ENCODE measurements at regions of chr12 and their contacts with region 1.

Region 1: DNA sequence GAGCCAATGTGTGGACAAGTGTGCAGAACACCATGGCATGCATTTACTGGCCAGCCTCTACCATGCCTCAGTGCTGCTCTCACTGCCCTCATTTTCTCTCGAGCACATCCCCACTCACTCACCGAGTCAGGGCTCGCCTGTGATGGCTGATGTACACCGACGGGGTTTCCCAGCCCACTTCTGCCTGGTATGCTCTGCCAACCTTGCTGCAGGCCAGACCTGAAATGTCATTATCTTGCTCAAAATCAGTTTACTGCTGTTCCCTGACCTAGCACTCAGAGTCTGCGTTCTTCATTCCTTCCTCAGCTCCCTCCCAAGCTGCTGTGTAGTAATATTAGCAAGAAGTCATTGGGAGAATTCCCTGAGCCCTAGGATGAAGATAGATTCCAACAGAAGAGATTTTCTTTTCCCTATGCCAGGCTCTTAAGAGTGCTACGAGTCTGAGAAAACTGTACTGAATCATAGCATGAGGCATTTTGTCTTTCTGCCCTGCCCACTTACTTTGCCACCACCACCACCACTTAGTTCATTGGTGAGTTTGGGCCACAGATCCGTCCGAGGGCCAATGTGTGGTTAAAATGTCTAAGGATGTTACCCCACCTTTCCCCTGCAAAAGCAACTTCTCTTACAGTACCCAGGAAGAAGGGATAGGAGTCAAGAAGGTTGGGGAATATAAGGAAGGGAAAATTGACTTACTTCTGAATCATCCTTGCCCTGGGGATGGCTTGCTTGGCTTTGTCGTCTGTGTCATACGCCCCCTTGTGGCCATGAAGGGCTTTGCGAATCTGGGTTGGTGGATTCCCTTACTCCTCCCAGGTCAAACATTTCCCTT is 51.0 kb downstream of the BMAL2 start:
- DNase-seq: peak; percentile 88
- H3K4me3 Mint-ChIP-seq: no peak overlapping the region
- H3K27ac Mint-ChIP-seq: peak overlapping the region; percentile 68
- H3K4me1 Mint-ChIP-seq: no peaks in the 10 kb centered on the region
- H3K27me3 Mint-ChIP-seq: no peaks in the 10 kb centered on the region
- CTCF ChIP-seq: peak; percentile 76

Region 2: GRCh38 chr12:27142101-27142721 is 241.4 kb before region 1 on chr12:
- CTCF ChIA-PET with region 1: no interaction called
- POLR2A ChIA-PET with region 1: no interaction called
- intact Hi-C with region 1: loop called (anchors 5 kb)
- DNase-seq: peak; percentile 84
- H3K4me3 Mint-ChIP-seq: no peak overlapping the region
- H3K27ac Mint-ChIP-seq: peak overlapping the region; percentile 41
- H3K4me1 Mint-ChIP-seq: no peaks in the 10 kb centered on the region
- H3K27me3 Mint-ChIP-seq: no peaks in the 10 kb centered on the region
- CTCF ChIP-seq: peak; percentile 73

Region 3: GRCh38 chr12:27319409-27319808 is 64.2 kb before region 1 on chr12:
- CTCF ChIA-PET with region 1: interaction called, 11 read pairs
- POLR2A ChIA-PET with region 1: interaction called, 3 read pairs
- intact Hi-C with region 1: no loop called
- DNase-seq: peak; percentile 52
- H3K4me3 Mint-ChIP-seq: no peak overlapping the region
- H3K27ac Mint-ChIP-seq: no peak overlapping the region
- H3K4me1 Mint-ChIP-seq: no peaks in the 10 kb centered on the region
- H3K27me3 Mint-ChIP-seq: no peaks in the 10 kb centered on the region
- CTCF ChIP-seq: no peak

Region 4: GRCh38 chr12:27332407-27333301 is 51.0 kb before region 1 on chr12 and contains the start of gene BMAL2:
- CTCF ChIA-PET with region 1: interaction called, 15 read pairs
- POLR2A ChIA-PET with region 1: interaction called, 11 read pairs
- intact Hi-C with region 1: loop called (anchors 1 kb)
- DNase-seq: peak; percentile 36
- H3K4me3 Mint-ChIP-seq: peak within 1 kb of the TSS; percentile 86
- H3K27ac Mint-ChIP-seq: peak within 1 kb of the TSS; percentile 98
- H3K4me1 Mint-ChIP-seq: peaks cover 47% of the 10 kb centered on the region
- H3K27me3 Mint-ChIP-seq: no peaks in the 10 kb centered on the region
- CTCF ChIP-seq: no peak
- total RNA-seq, gene BMAL2: 18.0 and 20.0 TPM in 2 replicates